WTC11 (cell line): ENCODE measurements at regions of chr15 and their contacts with region 1.

Region 1: GRCh38 chr15:78422571-78423340 is 15.3 kb upstream of the IREB2 start:
- DNase-seq: peak; percentile 72
- ATAC-seq: peak; percentile 87
- H3K4me3 Mint-ChIP-seq: no peak overlapping the region
- H3K27ac Mint-ChIP-seq: no peak overlapping the region
- H3K4me1 Mint-ChIP-seq: no peaks in the 10 kb centered on the region
- H3K27me3 Mint-ChIP-seq: peaks cover 3% of the 10 kb centered on the region; the same call in 1 of the 2 replicates
- CTCF ChIP-seq: peak; percentile 78

Region 2: GRCh38 chr15:78103748-78104479 is 318.8 kb before region 1 on chr15:
- CTCF ChIA-PET with region 1: no interaction called
- POLR2A ChIA-PET with region 1: no interaction called
- DNase-seq: no peak
- ATAC-seq: no peak
- H3K4me3 Mint-ChIP-seq: no peak overlapping the region
- H3K27ac Mint-ChIP-seq: no peak overlapping the region
- H3K4me1 Mint-ChIP-seq: peaks cover 3% of the 10 kb centered on the region; the same call in 1 of the 2 replicates
- H3K27me3 Mint-ChIP-seq: no peaks in the 10 kb centered on the region; the same call in 1 of the 2 replicates
- CTCF ChIP-seq: no peak

Region 3: GRCh38 chr15:78299101-78299930 is 123.4 kb before region 1 on chr15 and contains the start of gene SKIC8:
- CTCF ChIA-PET with region 1: interaction called, 10 read pairs
- POLR2A ChIA-PET with region 1: no interaction called
- DNase-seq: peak; percentile 91
- ATAC-seq: peak; percentile 94
- H3K4me3 Mint-ChIP-seq: peak within 1 kb of the TSS; percentile 95
- H3K27ac Mint-ChIP-seq: peak within 1 kb of the TSS; percentile 91
- H3K4me1 Mint-ChIP-seq: peaks cover 4% of the 10 kb centered on the region
- H3K27me3 Mint-ChIP-seq: peaks cover 12% of the 10 kb centered on the region
- CTCF ChIP-seq: no peak
- total RNA-seq, gene SKIC8: 49.5 to 55.6 TPM (median 50.9 TPM) in 3 replicates

Region 4: DNA sequence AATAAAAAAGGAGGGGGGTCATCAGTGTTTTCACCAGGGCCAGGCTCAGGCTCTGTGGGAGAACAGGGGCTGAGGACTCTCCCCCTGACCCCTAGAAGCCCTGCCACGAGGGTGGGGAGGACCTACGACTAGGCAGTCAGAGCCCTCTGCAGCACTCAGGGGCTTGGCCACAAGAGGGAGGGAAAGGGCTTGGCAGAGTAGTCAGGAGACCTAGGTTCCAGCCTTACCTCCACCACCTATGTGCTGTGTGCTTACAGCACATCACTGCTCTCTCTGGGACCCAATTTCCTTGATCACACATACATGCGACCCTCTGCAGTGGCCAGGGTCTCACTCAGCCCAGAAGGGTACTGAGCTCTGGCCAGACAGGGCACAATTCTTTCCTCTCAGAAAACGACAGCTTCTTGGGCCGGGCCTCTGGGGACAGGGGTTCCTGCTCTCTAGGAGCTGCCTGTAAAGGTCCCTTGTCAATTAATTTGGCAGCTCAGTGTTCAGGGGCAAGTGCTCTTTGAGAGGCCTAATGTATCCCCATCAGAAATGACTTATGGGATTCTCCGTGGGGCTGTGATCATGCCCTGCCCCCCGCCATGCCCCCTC is 107.0 kb before region 1 on chr15:
- CTCF ChIA-PET with region 1: interaction called, 31 read pairs
- POLR2A ChIA-PET with region 1: no interaction called
- DNase-seq: peak; percentile 75
- ATAC-seq: peak; percentile 91
- H3K4me3 Mint-ChIP-seq: no peak overlapping the region
- H3K27ac Mint-ChIP-seq: peak overlapping the region; percentile 95
- H3K4me1 Mint-ChIP-seq: peaks cover 36% of the 10 kb centered on the region
- H3K27me3 Mint-ChIP-seq: no peaks in the 10 kb centered on the region
- CTCF ChIP-seq: no peak

Region 5: DNA sequence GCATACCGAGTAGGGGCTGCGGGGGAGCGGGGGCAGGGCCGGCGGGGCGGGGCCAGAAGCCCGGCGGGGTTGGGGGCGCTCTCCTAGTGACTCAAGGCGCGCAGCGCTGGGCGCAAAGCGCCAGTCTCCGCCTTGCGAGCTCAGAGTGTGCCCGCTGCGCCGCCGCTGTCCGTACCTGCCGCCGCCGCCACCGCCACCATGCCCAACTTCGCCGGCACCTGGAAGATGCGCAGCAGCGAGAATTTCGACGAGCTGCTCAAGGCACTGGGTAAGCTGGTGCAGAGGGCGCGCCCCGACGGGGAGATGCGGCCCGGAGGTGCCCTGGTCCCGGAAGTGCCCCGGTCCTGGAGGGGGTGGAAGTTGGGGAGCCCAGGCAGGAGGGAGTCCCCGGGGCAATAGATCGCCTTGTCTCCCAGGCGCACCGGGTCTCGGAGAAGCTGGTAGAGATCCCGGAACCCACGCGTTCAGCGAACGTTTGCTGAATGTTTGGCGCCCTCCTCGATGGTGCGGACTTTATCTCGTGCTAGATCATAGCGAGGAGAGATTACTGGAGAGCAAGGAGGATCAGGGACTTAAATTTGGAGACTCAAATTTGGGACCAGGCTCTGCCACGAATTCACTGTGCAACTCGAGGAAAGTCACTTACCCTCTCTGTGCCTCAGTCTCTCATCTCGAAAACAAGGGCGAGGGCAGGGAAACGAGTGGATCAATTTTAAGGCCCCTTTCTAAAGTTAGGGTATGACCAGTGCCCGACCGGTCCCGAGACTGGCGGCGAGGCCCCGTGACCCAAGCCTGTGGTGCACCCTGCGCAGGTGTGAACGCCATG is 82.3 kb before region 1 on chr15 and contains the start of gene CRABP1:
- CTCF ChIA-PET with region 1: interaction called, 10 read pairs
- POLR2A ChIA-PET with region 1: no interaction called
- DNase-seq: peak; percentile 76
- ATAC-seq: peak; percentile 75
- H3K4me3 Mint-ChIP-seq: peak within 1 kb of the TSS; percentile 80
- H3K27ac Mint-ChIP-seq: no peak within 1 kb of the TSS
- H3K4me1 Mint-ChIP-seq: peaks cover 28% of the 10 kb centered on the region
- H3K27me3 Mint-ChIP-seq: peaks cover 32% of the 10 kb centered on the region
- CTCF ChIP-seq: no peak
- total RNA-seq, gene CRABP1: 374 to 444 TPM (median 377 TPM) in 3 replicates

Region 6: DNA sequence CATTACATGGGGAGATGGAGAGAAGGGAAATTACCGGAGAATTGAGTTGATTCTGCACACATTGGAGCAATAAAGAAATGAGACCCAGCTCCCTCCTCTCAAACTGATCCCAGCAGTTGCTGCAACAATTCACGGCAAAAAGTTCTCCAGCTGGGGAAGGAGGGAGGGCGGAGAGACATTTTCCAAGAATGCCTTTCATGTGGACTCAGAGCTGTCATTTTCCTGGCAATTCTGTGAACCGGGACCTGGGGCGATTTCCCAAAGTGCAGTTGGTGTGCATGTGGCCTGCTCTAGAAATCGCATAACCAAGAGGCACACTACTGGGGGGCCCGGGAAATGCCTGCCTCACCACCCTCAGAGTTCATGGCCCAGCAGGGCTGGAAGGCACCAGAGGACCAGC is 33.4 kb before region 1 on chr15:
- CTCF ChIA-PET with region 1: interaction called, 10 read pairs
- POLR2A ChIA-PET with region 1: interaction called, 5 read pairs
- DNase-seq: no peak
- ATAC-seq: no peak
- H3K4me3 Mint-ChIP-seq: no peak overlapping the region
- H3K27ac Mint-ChIP-seq: no peak overlapping the region
- H3K4me1 Mint-ChIP-seq: peaks cover 70% of the 10 kb centered on the region
- H3K27me3 Mint-ChIP-seq: peaks cover 19% of the 10 kb centered on the region
- CTCF ChIP-seq: no peak

Region 7: DNA sequence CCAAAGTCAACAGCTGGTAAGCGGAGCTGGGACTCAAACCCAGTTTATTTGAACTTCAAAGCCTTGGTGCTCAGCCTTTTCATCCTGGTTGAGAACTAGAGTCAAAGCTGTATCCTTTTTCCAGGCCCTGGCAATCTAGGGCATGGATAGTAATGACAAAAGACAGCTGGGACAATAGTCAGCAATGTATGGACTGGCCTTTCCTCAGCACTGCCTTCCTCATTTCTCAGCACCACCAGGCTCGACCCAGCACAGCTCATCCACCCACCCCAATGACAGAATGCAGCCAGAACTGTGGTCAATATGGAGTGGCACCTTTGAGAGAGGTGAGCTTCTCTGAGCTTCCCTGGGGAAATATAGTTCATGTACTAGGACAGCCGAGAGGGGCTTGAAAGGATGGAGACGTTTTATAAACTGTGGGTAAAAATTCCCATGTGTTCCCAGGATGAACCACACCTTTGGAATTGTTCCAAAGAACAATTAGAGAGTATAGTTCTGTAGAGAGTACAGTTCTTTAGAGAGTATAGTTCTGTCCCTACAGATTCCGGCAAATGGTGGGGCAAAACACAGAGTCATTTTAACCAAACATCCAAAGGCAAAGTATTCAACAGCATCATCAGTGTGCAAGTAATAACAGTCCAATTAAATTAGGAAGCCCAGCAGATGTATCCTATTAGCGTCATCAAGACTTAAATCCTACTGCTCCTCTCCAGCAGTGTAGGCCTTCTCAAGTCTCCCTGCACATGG is 15.0 kb before region 1 on chr15:
- CTCF ChIA-PET with region 1: interaction called, 25 read pairs
- POLR2A ChIA-PET with region 1: no interaction called
- DNase-seq: no peak
- ATAC-seq: no peak
- H3K4me3 Mint-ChIP-seq: no peak overlapping the region
- H3K27ac Mint-ChIP-seq: no peak overlapping the region
- H3K4me1 Mint-ChIP-seq: 0 out of 2 replicates have a peak, but pooled peaks cover 6% of the 10 kb centered on the region
- H3K27me3 Mint-ChIP-seq: no peaks in the 10 kb centered on the region
- CTCF ChIP-seq: no peak

Region 8: DNA sequence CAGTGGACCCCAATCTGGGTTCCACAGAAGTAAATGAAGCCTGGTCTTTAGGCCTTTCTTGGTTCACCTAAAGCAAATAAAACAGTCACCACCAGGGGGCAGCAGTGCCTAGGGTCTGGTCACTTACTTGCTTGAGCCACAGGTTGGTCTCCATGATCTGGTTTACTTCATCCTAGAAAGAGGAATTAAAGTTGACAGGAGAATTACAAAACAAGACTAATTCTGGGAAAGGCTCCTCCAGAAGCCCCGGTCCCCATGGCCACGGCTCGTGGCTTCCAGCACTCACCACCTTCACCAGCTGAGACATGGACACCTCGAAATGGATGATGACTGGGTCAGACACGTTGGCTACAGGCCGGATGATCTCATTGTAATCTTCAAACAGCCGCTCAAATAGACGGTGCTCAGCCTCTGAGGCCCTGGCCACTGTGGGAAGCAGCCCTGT is 195.8 kb after region 1 on chr15:
- CTCF ChIA-PET with region 1: no interaction called
- POLR2A ChIA-PET with region 1: no interaction called
- DNase-seq: peak; percentile 94
- ATAC-seq: peak; percentile 24
- H3K4me3 Mint-ChIP-seq: peak overlapping the region; percentile 33
- H3K27ac Mint-ChIP-seq: no peak overlapping the region
- H3K4me1 Mint-ChIP-seq: peaks cover 23% of the 10 kb centered on the region
- H3K27me3 Mint-ChIP-seq: peaks cover 48% of the 10 kb centered on the region
- CTCF ChIP-seq: peak; percentile 66